ENCODE measurements at regions of chr11 and their contacts with region 1.

Region 1: GRCh38 chr11:130002846-130003716 is 446 bp upstream of the PRDM10 start:
- DNase-seq: peak; percentile 89
- H3K4me3 Mint-ChIP-seq: peak overlapping the region; percentile 98
- H3K27ac Mint-ChIP-seq: peak overlapping the region; percentile 100
- H3K4me1 Mint-ChIP-seq: peaks cover 33% of the 10 kb centered on the region
- H3K27me3 Mint-ChIP-seq: peaks cover 7% of the 10 kb centered on the region

Region 2: GRCh38 chr11:129184581-129184980 is 818.5 kb before region 1 on chr11:
- intact Hi-C with region 1: no loop called
- DNase-seq: no peak
- H3K4me3 Mint-ChIP-seq: no peak overlapping the region
- H3K27ac Mint-ChIP-seq: no peak overlapping the region
- H3K4me1 Mint-ChIP-seq: no peaks in the 10 kb centered on the region
- H3K27me3 Mint-ChIP-seq: no peaks in the 10 kb centered on the region

Region 3: DNA sequence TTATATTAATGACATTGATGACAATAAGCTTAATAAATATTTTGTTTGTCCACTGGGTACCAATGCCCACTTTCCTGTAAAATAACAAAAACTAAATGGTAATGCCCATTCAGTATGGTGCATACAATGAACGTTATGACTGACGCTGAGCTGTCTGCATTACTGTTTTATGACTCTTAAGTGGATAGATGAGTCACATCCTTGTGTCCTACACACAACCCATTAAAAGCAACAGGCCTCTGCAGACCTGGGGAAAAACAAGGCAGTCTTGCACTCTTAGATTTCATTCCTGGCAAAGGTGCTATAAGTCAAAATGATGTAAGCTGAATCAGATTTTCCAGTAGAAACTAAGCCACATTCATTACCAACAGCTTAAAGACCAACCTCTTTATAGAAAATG is 363.8 kb before region 1 on chr11:
- intact Hi-C with region 1: loop called (anchors 5 kb)
- DNase-seq: peak; percentile 24
- H3K4me3 Mint-ChIP-seq: peak overlapping the region; percentile 21
- H3K27ac Mint-ChIP-seq: peak overlapping the region; percentile 86
- H3K4me1 Mint-ChIP-seq: peaks cover 80% of the 10 kb centered on the region
- H3K27me3 Mint-ChIP-seq: no peaks in the 10 kb centered on the region

Region 4: GRCh38 chr11:129922674-129923073 is 80.4 kb before region 1 on chr11:
- intact Hi-C with region 1: loop called (anchors 1 kb)
- DNase-seq: no peak
- H3K4me3 Mint-ChIP-seq: no peak overlapping the region
- H3K27ac Mint-ChIP-seq: no peak overlapping the region
- H3K4me1 Mint-ChIP-seq: peaks cover 20% of the 10 kb centered on the region
- H3K27me3 Mint-ChIP-seq: no peaks in the 10 kb centered on the region

Region 5: GRCh38 chr11:130069684-130070108 is 66.6 kb after region 1 on chr11 and contains the start of gene APLP2:
- intact Hi-C with region 1: loop called (anchors 1 kb)
- DNase-seq: peak; percentile 96
- H3K4me3 Mint-ChIP-seq: peak within 1 kb of the TSS; percentile 94
- H3K27ac Mint-ChIP-seq: peak within 1 kb of the TSS; percentile 89
- H3K4me1 Mint-ChIP-seq: peaks cover 17% of the 10 kb centered on the region
- H3K27me3 Mint-ChIP-seq: peaks cover 25% of the 10 kb centered on the region
- total RNA-seq, gene APLP2: 47.0 and 47.8 TPM in 2 replicates

Region 6: DNA sequence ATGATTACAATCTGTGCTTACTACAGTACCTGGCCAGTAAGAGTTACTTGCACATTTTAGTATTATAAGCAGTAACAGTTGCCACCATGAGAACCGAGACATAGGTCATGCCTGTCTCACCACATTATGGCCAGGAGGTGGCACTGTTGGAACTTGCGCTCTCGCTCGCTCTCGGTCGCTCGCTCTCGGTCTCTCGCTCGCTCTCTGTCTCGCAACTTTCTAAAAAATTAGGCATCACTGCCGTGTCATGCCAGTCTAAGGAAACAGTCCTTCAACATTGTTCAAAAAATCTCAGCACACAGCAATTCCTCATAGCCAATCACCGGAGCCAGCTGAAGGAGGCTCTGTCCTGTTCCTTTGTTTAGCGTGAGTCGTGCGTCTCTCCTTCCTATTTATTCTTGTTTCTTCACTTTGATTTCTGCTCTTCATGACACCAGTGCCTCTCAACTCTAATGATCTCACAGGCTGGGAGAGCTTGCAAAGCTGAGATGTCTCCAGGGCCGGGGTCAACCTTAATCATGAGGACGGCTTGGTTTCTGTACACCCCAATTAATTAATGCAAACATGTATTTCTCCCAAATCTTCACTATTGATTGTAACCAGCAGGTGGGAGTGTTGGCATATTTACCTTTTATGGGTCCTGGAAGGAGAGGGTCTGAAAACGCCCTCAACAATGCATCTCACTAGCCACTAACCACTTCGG is 431.6 kb after region 1 on chr11:
- intact Hi-C with region 1: loop called (anchors 5 kb)
- DNase-seq: peak; percentile 58
- H3K4me3 Mint-ChIP-seq: no peak overlapping the region
- H3K27ac Mint-ChIP-seq: no peak overlapping the region
- H3K4me1 Mint-ChIP-seq: peaks cover 19% of the 10 kb centered on the region
- H3K27me3 Mint-ChIP-seq: peaks cover 24% of the 10 kb centered on the region

Measured in activated T-helper 1 cell treated with anti-CD3 and anti-CD28 coated beads, Interleukin-12 subunit alpha, Interleukin-12 subunit beta, Interleukin-2, Interleukin-4 antibody, amounts not matched to agents 30 ng/mL and 10 ng/mL and 1 ng/mL, durations not matched to agents 14 hours and 24 hours and 36 hours (primary cell).